IMR-90 (cell line): ENCODE measurements at regions of chr3 and their contacts with region 1.

Region 1: DNA sequence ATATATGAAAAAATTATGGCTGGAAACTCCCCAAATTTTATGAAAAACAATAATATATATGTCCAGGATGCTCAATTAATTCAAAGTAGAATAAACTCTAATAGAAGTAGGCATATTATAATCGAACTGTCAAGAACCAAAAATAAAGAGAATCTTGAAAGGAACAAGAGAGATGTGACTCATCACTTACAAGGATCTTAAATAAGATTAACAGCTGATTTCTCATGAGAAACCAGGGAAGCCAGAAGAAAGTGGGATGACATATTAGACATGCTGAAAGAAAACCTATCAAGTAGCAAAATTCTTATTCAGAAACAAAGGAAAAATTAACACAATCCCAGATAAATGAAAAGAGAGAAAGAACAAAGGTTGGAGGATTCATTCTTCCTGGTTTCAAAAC is 66.8 kb downstream of the FAIM start:
- DNase-seq: peak; percentile 40
- ATAC-seq: no peak
- H3K4me3 ChIP-seq: no peak overlapping the region
- H3K27ac ChIP-seq: no peak overlapping the region
- H3K4me1 ChIP-seq: peaks cover 3% of the 10 kb centered on the region; the same call in 1 of the 2 replicates
- H3K27me3 ChIP-seq: no peaks in the 10 kb centered on the region
- CTCF ChIP-seq: no peak
- POLR2A ChIP-seq: no peak
- RAD21 ChIP-seq: no peak

Region 2: GRCh38 chr3:138850151-138850550 is 174.8 kb after region 1 on chr3:
- CTCF ChIA-PET with region 1: no interaction called
- POLR2A ChIA-PET with region 1: interaction called, 12 read pairs
- dilution Hi-C with region 1: no loop called
- in situ Hi-C with region 1: no loop called
- intact Hi-C with region 1: no loop called
- DNase-seq: peak; percentile 52
- ATAC-seq: peak; percentile 56
- H3K4me3 ChIP-seq: no peak overlapping the region
- H3K27ac ChIP-seq: no peak overlapping the region
- H3K4me1 ChIP-seq: peaks cover 2% of the 10 kb centered on the region; the same call in 1 of the 2 replicates
- H3K27me3 ChIP-seq: no peaks in the 10 kb centered on the region
- CTCF ChIP-seq: no peak
- POLR2A ChIP-seq: no peak
- RAD21 ChIP-seq: no peak